CD8-positive, alpha-beta T cell (primary cell): ENCODE measurements at regions of chr13 and their contacts with region 1.

Region 1: DNA sequence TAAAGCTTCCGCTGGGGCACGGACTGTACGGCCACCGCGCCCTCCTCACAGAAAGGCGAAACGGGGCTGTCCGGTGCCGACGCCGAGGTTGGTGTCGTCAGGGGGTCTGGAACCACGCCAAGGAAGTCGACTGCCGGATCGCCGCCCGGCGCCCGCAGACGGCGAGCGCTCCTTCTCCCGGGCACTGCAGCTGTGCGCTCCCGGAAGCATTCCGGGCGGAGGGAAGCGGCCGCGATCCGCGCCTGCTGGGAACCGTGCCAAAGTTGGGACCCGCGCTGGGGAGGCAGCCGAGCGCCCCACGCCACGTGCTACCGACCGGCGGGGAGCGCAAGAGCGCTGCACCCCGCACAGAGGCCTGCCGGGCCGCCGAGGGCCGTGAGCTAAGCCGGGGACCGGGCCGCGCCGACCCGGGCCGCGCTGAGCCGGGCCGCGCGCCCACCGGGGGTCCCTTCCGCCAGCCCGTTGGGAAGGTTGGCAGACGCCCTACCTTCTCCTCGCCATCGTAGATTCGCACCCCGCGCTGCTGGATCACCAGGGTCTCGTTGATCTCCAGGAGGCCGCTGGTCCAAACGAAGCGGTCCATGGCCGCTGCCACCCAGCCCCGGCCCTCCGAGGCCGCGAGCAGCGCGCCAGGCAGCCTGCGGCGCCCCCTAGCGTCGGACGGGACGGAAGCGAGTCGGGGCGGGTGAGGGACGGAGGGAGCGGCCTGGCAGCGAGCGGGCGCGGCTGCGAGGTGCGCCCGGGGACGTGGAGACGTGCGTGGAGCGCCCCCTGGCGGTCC is at the start of gene VPS36:
- DNase-seq: peak; percentile 88 to 98 (median 95)
- ATAC-seq: peak; percentile 58
- H3K4me3 ChIP-seq: peak within 1 kb of the TSS; percentile 90 to 95
- H3K4me3 Mint-ChIP-seq: peak within 1 kb of the TSS; percentile 89
- H3K27ac ChIP-seq: peak within 1 kb of the TSS; percentile 64 to 82
- H3K27ac Mint-ChIP-seq: peak within 1 kb of the TSS; percentile 93
- H3K4me1 ChIP-seq: peaks cover 34% of the 10 kb centered on the region
- H3K4me1 Mint-ChIP-seq: peaks cover 47% of the 10 kb centered on the region
- H3K27me3 ChIP-seq: no peaks in the 10 kb centered on the region
- H3K27me3 Mint-ChIP-seq: no peaks in the 10 kb centered on the region
- CTCF ChIP-seq: peak; percentile 99
- total RNA-seq, gene VPS36: 20.7 to 24.7 TPM

Region 2: DNA sequence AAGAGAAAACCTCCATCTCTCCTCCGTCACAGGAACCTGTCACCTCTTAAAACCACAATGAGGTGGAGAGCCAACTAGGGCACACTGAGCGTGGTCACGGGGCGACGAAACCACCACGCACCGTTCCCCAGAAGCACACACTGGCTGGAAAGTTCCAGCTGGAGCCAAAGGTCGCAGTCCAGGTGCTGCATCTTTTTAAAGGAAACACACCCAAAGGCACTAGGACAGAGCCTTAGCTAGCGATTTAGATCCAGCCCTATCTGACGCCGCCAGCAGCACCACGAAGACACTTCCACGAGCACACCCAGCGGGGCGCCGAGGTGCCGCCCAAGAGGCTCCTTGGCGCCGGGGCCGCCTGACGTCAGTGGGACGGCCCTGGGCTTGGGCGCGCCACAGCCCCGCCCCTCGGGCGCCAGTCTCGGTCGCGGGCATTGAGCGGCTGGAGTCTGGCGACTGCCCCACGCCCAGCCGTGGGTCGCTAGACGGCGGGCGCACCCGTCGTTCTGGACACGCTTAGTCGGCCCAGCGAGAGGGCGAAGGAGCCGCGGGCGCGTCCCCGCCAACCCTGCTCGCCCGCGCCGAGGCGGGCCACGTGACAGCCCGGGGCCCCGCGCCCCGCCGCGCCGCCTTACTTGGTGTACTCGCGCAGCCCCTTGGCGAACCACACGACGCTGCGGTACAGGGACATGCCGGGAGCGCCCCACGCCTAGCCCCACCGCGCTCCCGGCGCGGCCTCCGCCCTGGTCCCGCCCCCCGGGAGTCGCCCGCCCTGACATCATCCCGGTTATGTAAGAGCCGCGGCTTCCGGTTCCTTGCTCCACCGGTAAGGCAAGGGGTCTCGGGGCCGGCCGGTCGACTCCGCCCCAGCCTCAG is 646.5 kb before region 1 on chr13 and contains the start of gene DHRS12:
- CTCF ChIA-PET with region 1: no interaction called
- POLR2A ChIA-PET with region 1: no interaction called
- intact Hi-C with region 1: loop called (anchors 1 to 5 kb)
- DNase-seq: peak; percentile 75 to 97 (median 88)
- ATAC-seq: peak; percentile 71
- H3K4me3 ChIP-seq: peak within 1 kb of the TSS; percentile 77 to 79
- H3K4me3 Mint-ChIP-seq: peak within 1 kb of the TSS; percentile 92
- H3K27ac ChIP-seq: peak within 1 kb of the TSS; percentile 97 to 99
- H3K27ac Mint-ChIP-seq: peak within 1 kb of the TSS; percentile 100
- H3K4me1 ChIP-seq: peaks cover 39% of the 10 kb centered on the region
- H3K4me1 Mint-ChIP-seq: peaks cover 55% of the 10 kb centered on the region
- H3K27me3 ChIP-seq: no peaks in the 10 kb centered on the region
- H3K27me3 Mint-ChIP-seq: no peaks in the 10 kb centered on the region
- CTCF ChIP-seq: no peak
- total RNA-seq, gene DHRS12: 13.4 to 14.1 TPM

Region 3: DNA sequence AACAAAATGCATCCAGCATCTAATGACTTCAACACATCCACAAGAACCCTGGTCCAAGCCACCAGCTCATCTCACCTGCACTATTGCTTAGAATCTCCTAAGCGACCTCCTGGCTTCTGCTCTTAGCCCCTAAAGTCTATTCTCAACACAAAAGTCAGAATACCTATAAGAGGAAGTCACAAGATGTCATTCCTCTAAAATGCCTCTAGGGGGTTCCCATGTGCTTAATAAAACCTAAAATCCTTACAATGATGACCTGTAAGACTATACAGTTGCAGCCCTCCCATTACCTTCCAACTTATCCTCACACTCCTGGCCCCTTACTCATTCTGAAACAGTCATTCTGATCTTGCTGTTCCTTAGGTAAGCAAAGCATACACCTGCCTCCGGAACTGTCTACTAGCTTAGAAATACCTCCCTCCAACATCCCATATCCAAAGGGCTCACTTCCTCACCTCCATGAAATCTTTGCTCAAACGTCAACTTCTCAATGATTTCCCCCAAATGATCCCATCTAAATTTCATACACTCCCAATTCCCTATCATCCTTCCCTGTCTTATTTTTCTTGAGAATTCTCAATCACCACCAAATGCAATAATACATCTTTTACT is 449.0 kb before region 1 on chr13:
- CTCF ChIA-PET with region 1: interaction called, 8 read pairs
- POLR2A ChIA-PET with region 1: no interaction called
- intact Hi-C with region 1: loop called in 1 of 2 experiments (anchors 1 kb)
- DNase-seq: peak in 2 of 9 experiments; percentile 50 to 62
- ATAC-seq: peak; percentile 90
- H3K4me3 ChIP-seq: no peak overlapping the region
- H3K4me3 Mint-ChIP-seq: no peak overlapping the region
- H3K27ac ChIP-seq: no peak overlapping the region
- H3K27ac Mint-ChIP-seq: no peak overlapping the region
- H3K4me1 ChIP-seq: no peaks in the 10 kb centered on the region
- H3K4me1 Mint-ChIP-seq: no peaks in the 10 kb centered on the region
- H3K27me3 ChIP-seq: no peaks in the 10 kb centered on the region
- H3K27me3 Mint-ChIP-seq: peaks cover 18% of the 10 kb centered on the region
- CTCF ChIP-seq: peak; percentile 66

Region 4: GRCh38 chr13:52194184-52194868 is 255.9 kb before region 1 on chr13:
- CTCF ChIA-PET with region 1: interaction called, 7 read pairs
- POLR2A ChIA-PET with region 1: no interaction called
- intact Hi-C with region 1: loop called (anchors 1 kb)
- DNase-seq: peak; percentile 81 to 95 (median 86)
- ATAC-seq: peak; percentile 85
- H3K4me3 ChIP-seq: peak overlapping the region; percentile 76 to 87
- H3K4me3 Mint-ChIP-seq: peak overlapping the region; percentile 98
- H3K27ac ChIP-seq: peak overlapping the region; percentile 64 to 65
- H3K27ac Mint-ChIP-seq: peak overlapping the region; percentile 98
- H3K4me1 ChIP-seq: peaks cover 16% of the 10 kb centered on the region
- H3K4me1 Mint-ChIP-seq: peaks cover 39% of the 10 kb centered on the region
- H3K27me3 ChIP-seq: no peaks in the 10 kb centered on the region
- H3K27me3 Mint-ChIP-seq: no peaks in the 10 kb centered on the region
- CTCF ChIP-seq: no peak

Region 5: GRCh38 chr13:52414963-52415362 is 35.2 kb before region 1 on chr13:
- CTCF ChIA-PET with region 1: interaction called, 11 read pairs
- POLR2A ChIA-PET with region 1: no interaction called
- intact Hi-C with region 1: no loop called
- DNase-seq: no peak
- ATAC-seq: no peak
- H3K4me3 ChIP-seq: no peak overlapping the region
- H3K4me3 Mint-ChIP-seq: no peak overlapping the region
- H3K27ac ChIP-seq: no peak overlapping the region
- H3K27ac Mint-ChIP-seq: no peak overlapping the region
- H3K4me1 ChIP-seq: no peaks in the 10 kb centered on the region
- H3K4me1 Mint-ChIP-seq: no peaks in the 10 kb centered on the region
- H3K27me3 ChIP-seq: no peaks in the 10 kb centered on the region
- H3K27me3 Mint-ChIP-seq: no peaks in the 10 kb centered on the region
- CTCF ChIP-seq: no peak